B cell (primary cell): ENCODE measurements at regions of chr11 and their contacts with region 1.

Region 1: GRCh38 chr11:130166457-130166784 is 6.8 kb downstream of the ST14 start:
- DNase-seq: peak; percentile 83
- ATAC-seq: peak; percentile 83
- H3K4me3 ChIP-seq: no peak overlapping the region
- H3K4me3 Mint-ChIP-seq: peak overlapping the region; percentile 82
- H3K27ac ChIP-seq: peak overlapping the region; percentile 54 to 77
- H3K27ac Mint-ChIP-seq: peak overlapping the region; percentile 95
- H3K4me1 ChIP-seq: peaks cover 41 to 73% of the 10 kb centered on the region in 2 donors
- H3K4me1 Mint-ChIP-seq: peaks cover 86% of the 10 kb centered on the region
- H3K27me3 ChIP-seq: no peaks in the 10 kb centered on the region
- H3K27me3 Mint-ChIP-seq: no peaks in the 10 kb centered on the region
- CTCF ChIP-seq: no peak

Region 2: DNA sequence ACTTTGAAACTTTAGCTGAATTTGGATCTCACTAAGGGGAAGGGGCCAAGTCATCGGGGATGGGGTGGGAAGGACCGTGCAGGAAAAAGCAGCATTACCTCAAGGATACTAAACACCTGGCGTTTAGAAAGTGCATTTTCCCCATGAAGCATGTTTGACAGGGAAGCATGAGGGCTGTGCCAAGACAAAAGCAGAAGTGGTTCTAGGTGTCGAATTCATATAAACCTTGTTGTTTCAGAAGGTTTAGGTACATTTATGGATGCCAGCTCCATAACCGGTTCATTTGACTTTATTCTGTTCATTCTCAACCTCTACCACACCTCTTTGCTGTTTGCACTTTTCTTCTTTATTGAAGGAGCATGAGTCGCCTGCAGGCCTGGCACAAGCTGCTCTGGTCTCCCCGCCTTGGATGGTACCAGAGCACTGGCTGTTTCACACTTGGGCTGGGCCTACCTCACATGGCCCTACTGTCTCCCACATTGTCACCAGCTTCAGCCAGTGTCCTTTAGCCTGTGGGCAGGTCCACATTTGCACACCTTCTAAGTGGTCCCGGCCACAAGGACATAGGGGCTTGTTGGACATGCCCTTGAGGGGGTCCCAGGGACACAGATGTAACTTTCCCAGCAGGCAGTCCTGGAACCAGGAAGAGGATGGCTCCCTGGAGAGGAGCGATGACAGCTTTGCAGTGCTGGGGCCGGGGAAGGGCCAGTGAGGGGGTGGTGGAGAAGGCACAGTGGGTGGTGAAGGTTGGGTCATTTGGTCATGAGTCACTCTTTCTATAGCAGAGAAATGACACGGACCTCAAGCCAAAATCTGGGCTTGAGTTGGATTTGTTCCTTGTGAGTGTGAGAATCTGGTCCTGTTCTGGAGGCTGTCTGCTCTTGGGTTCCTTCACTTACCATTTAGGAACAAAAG is 10.1 kb before region 1 on chr11:
- CTCF ChIA-PET with region 1: no interaction called
- POLR2A ChIA-PET with region 1: no interaction called
- intact Hi-C with region 1: no loop called
- DNase-seq: no peak
- ATAC-seq: no peak
- H3K4me3 ChIP-seq: no peak overlapping the region
- H3K4me3 Mint-ChIP-seq: no peak overlapping the region
- H3K27ac ChIP-seq: no peak overlapping the region
- H3K27ac Mint-ChIP-seq: peak overlapping the region; percentile 32
- H3K4me1 ChIP-seq: peaks cover 14 to 24% of the 10 kb centered on the region in 2 donors
- H3K4me1 Mint-ChIP-seq: peaks cover 43% of the 10 kb centered on the region
- H3K27me3 ChIP-seq: no peaks in the 10 kb centered on the region
- H3K27me3 Mint-ChIP-seq: no peaks in the 10 kb centered on the region
- CTCF ChIP-seq: no peak

Region 3: GRCh38 chr11:130181295-130182272 is 15.2 kb after region 1 on chr11:
- CTCF ChIA-PET with region 1: interaction called, 7 read pairs
- POLR2A ChIA-PET with region 1: interaction called, 12 read pairs
- intact Hi-C with region 1: loop called (anchors 2 kb)
- DNase-seq: peak; percentile 79
- ATAC-seq: peak; percentile 84
- H3K4me3 ChIP-seq: no peak overlapping the region
- H3K4me3 Mint-ChIP-seq: peak overlapping the region; percentile 61
- H3K27ac ChIP-seq: peak overlapping the region; percentile 74 to 76
- H3K27ac Mint-ChIP-seq: peak overlapping the region; percentile 94
- H3K4me1 ChIP-seq: peaks cover 42 to 56% of the 10 kb centered on the region in 2 donors
- H3K4me1 Mint-ChIP-seq: peaks cover 56% of the 10 kb centered on the region
- H3K27me3 ChIP-seq: no peaks in the 10 kb centered on the region
- H3K27me3 Mint-ChIP-seq: no peaks in the 10 kb centered on the region
- CTCF ChIP-seq: no peak